Activated CD4-positive, alpha-beta memory T cell treated with anti-CD3 and anti-CD28 coated beads for 36 hours (primary cell): ENCODE measurements at regions of chr15 and their contacts with region 1.

Region 1: GRCh38 chr15:42273102-42273899 is at the starts of genes GANC and TMEM87A:
- DNase-seq: peak; percentile 98
- H3K4me3 Mint-ChIP-seq: peak within 1 kb of the TSS; percentile 99
- H3K27ac Mint-ChIP-seq: peak within 1 kb of the TSS; percentile 99
- H3K4me1 Mint-ChIP-seq: peaks cover 44% of the 10 kb centered on the region
- H3K27me3 Mint-ChIP-seq: no peaks in the 10 kb centered on the region
- total RNA-seq, gene GANC: 23.5 to 26.1 TPM
- total RNA-seq, gene TMEM87A: 26.1 to 28.7 TPM

Region 2: GRCh38 chr15:42193383-42193782 is 79.9 kb before region 1 on chr15:
- CTCF ChIA-PET with region 1: interaction called, 3 read pairs
- POLR2A ChIA-PET with region 1: no interaction called
- intact Hi-C with region 1: loop called (anchors 1 kb)
- DNase-seq: no peak
- H3K4me3 Mint-ChIP-seq: peak overlapping the region; percentile 41
- H3K27ac Mint-ChIP-seq: peak overlapping the region; percentile 83
- H3K4me1 Mint-ChIP-seq: peaks cover 62% of the 10 kb centered on the region
- H3K27me3 Mint-ChIP-seq: no peaks in the 10 kb centered on the region

Region 3: GRCh38 chr15:42495361-42496212 is 222.3 kb after region 1 on chr15 and contains the start of gene SNAP23:
- CTCF ChIA-PET with region 1: no interaction called
- POLR2A ChIA-PET with region 1: interaction called, 3 read pairs
- intact Hi-C with region 1: loop called (anchors 5 kb)
- DNase-seq: peak; percentile 91
- H3K4me3 Mint-ChIP-seq: peak within 1 kb of the TSS; percentile 95
- H3K27ac Mint-ChIP-seq: peak within 1 kb of the TSS; percentile 88
- H3K4me1 Mint-ChIP-seq: peaks cover 67% of the 10 kb centered on the region
- H3K27me3 Mint-ChIP-seq: no peaks in the 10 kb centered on the region
- total RNA-seq, gene SNAP23: 43.1 to 46.8 TPM

Region 4: GRCh38 chr15:42920519-42921227 is 647.4 kb after region 1 on chr15 and contains the start of gene TTBK2:
- CTCF ChIA-PET with region 1: no interaction called
- POLR2A ChIA-PET with region 1: no interaction called
- intact Hi-C with region 1: loop called (anchors 2 kb)
- DNase-seq: peak; percentile 98
- H3K4me3 Mint-ChIP-seq: peak within 1 kb of the TSS; percentile 99
- H3K27ac Mint-ChIP-seq: peak within 1 kb of the TSS; percentile 91
- H3K4me1 Mint-ChIP-seq: peaks cover 31% of the 10 kb centered on the region
- H3K27me3 Mint-ChIP-seq: no peaks in the 10 kb centered on the region
- total RNA-seq, gene TTBK2: 12.6 to 13.8 TPM